ENCODE measurements at regions of chrX and their contacts with region 1.

Region 1: GRCh38 chrX:120790118-120790517 is 85.5 kb downstream of the CT47B1 start:
- DNase-seq: peak; percentile 23
- H3K4me3 Mint-ChIP-seq: peak overlapping the region; percentile 43
- H3K27ac Mint-ChIP-seq: peak overlapping the region; percentile 83
- H3K4me1 Mint-ChIP-seq: peaks cover 19% of the 10 kb centered on the region
- H3K27me3 Mint-ChIP-seq: no peaks in the 10 kb centered on the region

Region 2: GRCh38 chrX:120428309-120428708 is 361.8 kb before region 1 on chrX:
- CTCF ChIA-PET with region 1: no interaction called
- intact Hi-C with region 1: no loop called
- DNase-seq: no peak
- H3K4me3 Mint-ChIP-seq: no peak overlapping the region
- H3K27ac Mint-ChIP-seq: no peak overlapping the region
- H3K4me1 Mint-ChIP-seq: peaks cover 12% of the 10 kb centered on the region
- H3K27me3 Mint-ChIP-seq: no peaks in the 10 kb centered on the region

Region 3: DNA sequence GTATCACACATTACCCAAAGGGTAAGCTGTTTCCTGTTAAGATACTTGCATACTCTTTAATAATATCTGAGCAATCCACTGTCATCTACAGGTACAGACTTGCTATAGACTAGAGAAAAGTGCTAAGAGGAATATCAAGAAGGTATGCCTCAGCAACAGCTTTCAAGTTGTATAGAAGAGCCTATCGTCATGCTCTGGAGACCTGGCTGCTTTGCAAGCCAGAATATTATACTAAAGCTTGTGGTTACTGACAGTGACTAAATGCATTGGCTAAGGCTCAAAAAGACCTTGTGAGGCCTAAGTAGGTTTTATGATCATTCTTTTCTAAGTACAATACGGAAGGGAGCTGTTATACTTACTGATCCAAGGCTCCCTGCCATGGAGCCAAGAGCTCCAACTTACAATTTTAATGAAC is 332.3 kb before region 1 on chrX:
- CTCF ChIA-PET with region 1: no interaction called
- intact Hi-C with region 1: no loop called
- DNase-seq: peak; percentile 9
- H3K4me3 Mint-ChIP-seq: no peak overlapping the region
- H3K27ac Mint-ChIP-seq: peak overlapping the region; percentile 59
- H3K4me1 Mint-ChIP-seq: peaks cover 44% of the 10 kb centered on the region
- H3K27me3 Mint-ChIP-seq: no peaks in the 10 kb centered on the region

Region 4: DNA sequence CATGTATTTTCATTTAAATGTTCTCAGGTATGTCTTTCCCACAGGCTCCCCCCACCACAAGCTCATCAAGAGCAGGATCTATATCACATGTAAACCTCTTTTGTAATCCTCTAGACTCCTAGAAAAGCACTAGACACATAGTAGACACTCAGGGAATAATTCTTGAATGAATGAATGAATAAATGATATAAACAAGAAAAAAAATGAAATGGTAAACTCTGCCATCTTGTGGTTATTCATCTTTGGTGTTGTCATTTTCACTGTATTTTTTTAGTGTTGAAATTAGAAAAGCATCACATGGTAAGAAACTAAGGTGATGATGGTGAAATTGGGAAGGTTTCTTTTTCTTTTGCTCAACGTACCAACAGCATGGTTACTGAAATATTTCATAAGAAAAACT is 126.0 kb before region 1 on chrX:
- CTCF ChIA-PET with region 1: no interaction called
- intact Hi-C with region 1: no loop called
- DNase-seq: no peak
- H3K4me3 Mint-ChIP-seq: no peak overlapping the region
- H3K27ac Mint-ChIP-seq: peak overlapping the region; percentile 36
- H3K4me1 Mint-ChIP-seq: peaks cover 4% of the 10 kb centered on the region
- H3K27me3 Mint-ChIP-seq: no peaks in the 10 kb centered on the region

Region 5: GRCh38 chrX:120840827-120841226 is 50.7 kb after region 1 on chrX:
- CTCF ChIA-PET with region 1: no interaction called
- intact Hi-C with region 1: loop called (anchors 5 kb)
- DNase-seq: no peak
- H3K4me3 Mint-ChIP-seq: no peak overlapping the region
- H3K27ac Mint-ChIP-seq: no peak overlapping the region
- H3K4me1 Mint-ChIP-seq: no peaks in the 10 kb centered on the region
- H3K27me3 Mint-ChIP-seq: no peaks in the 10 kb centered on the region

Region 6: GRCh38 chrX:120857240-120857639 is 67.1 kb after region 1 on chrX:
- CTCF ChIA-PET with region 1: interaction called, 5 read pairs
- intact Hi-C with region 1: loop called (anchors 1 kb)
- DNase-seq: no peak
- H3K4me3 Mint-ChIP-seq: no peak overlapping the region
- H3K27ac Mint-ChIP-seq: no peak overlapping the region
- H3K4me1 Mint-ChIP-seq: no peaks in the 10 kb centered on the region
- H3K27me3 Mint-ChIP-seq: no peaks in the 10 kb centered on the region

Region 7: GRCh38 chrX:121256647-121257046 is 466.5 kb after region 1 on chrX:
- CTCF ChIA-PET with region 1: no interaction called
- intact Hi-C with region 1: loop called (anchors 5 kb)
- DNase-seq: peak; percentile 14
- H3K4me3 Mint-ChIP-seq: no peak overlapping the region
- H3K27ac Mint-ChIP-seq: no peak overlapping the region
- H3K4me1 Mint-ChIP-seq: peaks cover 17% of the 10 kb centered on the region
- H3K27me3 Mint-ChIP-seq: no peaks in the 10 kb centered on the region

Region 8: GRCh38 chrX:121579016-121579760 is 789.1 kb after region 1 on chrX:
- CTCF ChIA-PET with region 1: no interaction called
- intact Hi-C with region 1: loop called (anchors 1 kb)
- DNase-seq: peak; percentile 46
- H3K4me3 Mint-ChIP-seq: no peak overlapping the region
- H3K27ac Mint-ChIP-seq: no peak overlapping the region
- H3K4me1 Mint-ChIP-seq: peaks cover 13% of the 10 kb centered on the region
- H3K27me3 Mint-ChIP-seq: peaks cover under 1% of the 10 kb centered on the region

Region 9: DNA sequence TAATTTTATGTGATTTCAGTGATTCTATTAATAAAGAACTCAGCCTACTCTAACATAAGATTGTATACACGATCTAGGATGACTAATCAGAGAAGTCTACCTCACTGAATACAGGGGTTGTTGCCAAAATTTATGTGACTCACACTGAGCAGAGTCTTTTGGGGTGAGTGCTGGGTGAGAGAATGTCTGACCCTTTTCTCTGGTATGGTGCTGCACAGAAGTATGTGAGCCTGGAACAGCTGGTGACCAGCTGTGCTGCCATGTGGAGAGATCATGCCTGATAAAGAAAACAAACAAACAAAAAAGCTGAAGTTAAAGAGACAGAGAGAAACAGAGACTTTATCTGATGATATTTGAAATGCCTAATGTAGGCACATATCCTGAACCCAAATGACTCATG is 1775.8 kb after region 1 on chrX:
- CTCF ChIA-PET with region 1: no interaction called
- intact Hi-C with region 1: no loop called
- DNase-seq: no peak
- H3K4me3 Mint-ChIP-seq: no peak overlapping the region
- H3K27ac Mint-ChIP-seq: no peak overlapping the region
- H3K4me1 Mint-ChIP-seq: no peaks in the 10 kb centered on the region
- H3K27me3 Mint-ChIP-seq: no peaks in the 10 kb centered on the region

Measured in activated naive CD4-positive, alpha-beta T cell treated with anti-CD3 and anti-CD28 coated beads for 36 hours (primary cell).